Activated CD4-positive, alpha-beta T cell treated with anti-CD3 and anti-CD28 coated beads, Interleukin-2, amount 10 ng/mL, durations not matched to agents 7 days and 5 days (primary cell): ENCODE measurements at regions of chr3 and their contacts with region 1.

Region 1: GRCh38 chr3:41234823-41235721 is 35.8 kb downstream of the CTNNB1 start:
- DNase-seq: no peak
- H3K4me3 Mint-ChIP-seq: no peak overlapping the region
- H3K27ac Mint-ChIP-seq: no peak overlapping the region
- H3K4me1 Mint-ChIP-seq: no peaks in the 10 kb centered on the region
- H3K27me3 Mint-ChIP-seq: no peaks in the 10 kb centered on the region

Region 2: DNA sequence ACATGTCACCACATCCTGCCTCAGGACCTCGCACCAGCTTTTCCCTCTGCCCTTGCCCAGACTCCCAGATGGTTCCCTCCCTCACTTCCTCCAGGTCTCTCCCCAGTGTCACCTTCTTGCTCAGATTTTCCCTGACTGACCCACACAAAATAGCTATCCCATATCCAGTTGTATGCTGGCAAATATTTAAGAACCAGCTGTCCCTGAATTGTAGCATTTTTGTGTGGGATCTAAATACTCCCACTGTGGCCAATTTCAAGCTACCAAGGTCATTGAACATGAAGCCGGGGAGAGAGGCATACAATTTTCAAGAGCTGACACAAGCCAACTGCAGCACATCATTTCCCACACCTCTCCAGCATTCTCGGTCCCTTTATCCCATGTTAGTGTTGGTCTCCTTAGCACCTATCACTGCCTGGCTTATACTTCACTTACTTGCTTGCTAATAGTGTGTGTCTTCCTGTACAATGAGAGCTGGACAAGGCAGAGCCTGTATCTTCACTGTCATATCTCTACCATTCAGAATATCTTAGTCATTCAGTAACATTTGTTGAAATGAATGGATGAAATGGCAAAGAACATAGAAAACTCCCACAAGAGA is 137.1 kb before region 1 on chr3:
- CTCF ChIA-PET with region 1: no interaction called
- POLR2A ChIA-PET with region 1: interaction called, 12 read pairs
- DNase-seq: no peak
- H3K4me3 Mint-ChIP-seq: no peak overlapping the region
- H3K27ac Mint-ChIP-seq: no peak overlapping the region
- H3K4me1 Mint-ChIP-seq: no peaks in the 10 kb centered on the region
- H3K27me3 Mint-ChIP-seq: no peaks in the 10 kb centered on the region